Astrocyte of the cerebellum (primary cell): ENCODE measurements at regions of chr6 and their contacts with region 1.

Region 1: DNA sequence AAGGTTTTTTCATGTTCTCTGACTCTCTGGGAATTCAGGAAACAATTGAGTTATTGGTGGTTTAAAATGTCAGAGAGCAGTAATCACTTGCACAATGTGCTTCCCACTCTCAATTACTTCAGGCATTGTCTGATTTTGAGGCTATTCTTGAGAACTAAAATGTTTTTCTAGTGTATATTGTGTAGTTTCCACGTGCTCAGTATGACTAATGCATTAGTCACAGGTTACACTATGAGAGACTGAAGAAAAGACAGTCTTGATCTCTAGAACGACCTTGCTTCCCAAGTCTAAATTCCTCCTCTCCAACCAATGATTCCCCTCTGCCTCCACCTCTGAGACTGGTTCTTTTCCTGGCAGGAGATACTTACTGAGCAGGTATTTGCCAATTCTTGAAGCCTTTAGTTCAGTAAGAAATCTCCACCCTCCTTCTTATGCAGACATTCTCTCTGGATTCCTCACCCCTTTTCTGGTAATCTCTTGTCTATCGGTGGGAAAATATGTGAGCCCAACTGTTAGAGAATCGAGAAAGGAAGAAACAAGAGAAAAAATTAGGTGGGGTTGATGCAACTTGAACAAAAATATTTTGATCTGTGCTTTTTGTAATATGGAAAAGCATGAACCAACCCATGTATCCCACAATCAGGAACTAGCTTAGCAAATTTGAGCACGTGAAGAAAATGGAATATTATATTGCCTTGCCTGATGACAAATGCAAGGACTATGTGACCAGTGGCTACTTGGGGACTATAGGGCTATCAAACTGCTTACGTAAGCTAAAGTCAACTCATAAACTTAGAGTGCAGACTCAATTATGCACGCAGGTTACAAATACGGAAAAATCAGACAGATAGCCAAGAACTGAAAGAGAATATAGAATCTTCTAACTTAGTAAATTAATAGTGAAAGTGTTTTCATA is 61.1 kb upstream of the SLC22A16 start:
- DNase-seq: peak; percentile 89
- H3K4me3 ChIP-seq: no peak overlapping the region
- CTCF ChIP-seq: no peak

Region 2: GRCh38 chr6:110609101-110609500 is 71.6 kb after region 1 on chr6:
- in situ Hi-C with region 1: loop called (anchors 10 kb)
- DNase-seq: no peak
- H3K4me3 ChIP-seq: no peak overlapping the region
- CTCF ChIP-seq: no peak

Region 3: DNA sequence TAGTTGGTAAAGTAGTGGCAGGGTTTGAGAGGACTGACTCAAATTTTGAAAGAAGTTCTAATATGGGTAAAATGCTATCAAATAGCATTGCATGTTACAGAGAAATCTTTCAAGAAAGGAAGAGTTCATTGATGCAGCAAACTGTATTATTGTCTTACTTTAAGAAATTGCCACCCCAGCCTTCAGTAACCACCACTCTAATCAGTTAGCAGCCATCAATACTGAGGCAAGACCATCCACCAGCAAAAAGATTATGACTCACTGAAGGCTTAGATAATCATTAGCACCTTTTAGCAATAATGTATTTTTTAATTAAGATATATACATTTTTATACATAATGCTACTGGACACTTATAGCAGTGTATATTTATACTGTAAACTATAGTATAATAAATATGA is 138.9 kb after region 1 on chr6:
- in situ Hi-C with region 1: loop called (anchors 5 kb)
- DNase-seq: no peak
- H3K4me3 ChIP-seq: no peak overlapping the region
- CTCF ChIP-seq: no peak

Region 4: DNA sequence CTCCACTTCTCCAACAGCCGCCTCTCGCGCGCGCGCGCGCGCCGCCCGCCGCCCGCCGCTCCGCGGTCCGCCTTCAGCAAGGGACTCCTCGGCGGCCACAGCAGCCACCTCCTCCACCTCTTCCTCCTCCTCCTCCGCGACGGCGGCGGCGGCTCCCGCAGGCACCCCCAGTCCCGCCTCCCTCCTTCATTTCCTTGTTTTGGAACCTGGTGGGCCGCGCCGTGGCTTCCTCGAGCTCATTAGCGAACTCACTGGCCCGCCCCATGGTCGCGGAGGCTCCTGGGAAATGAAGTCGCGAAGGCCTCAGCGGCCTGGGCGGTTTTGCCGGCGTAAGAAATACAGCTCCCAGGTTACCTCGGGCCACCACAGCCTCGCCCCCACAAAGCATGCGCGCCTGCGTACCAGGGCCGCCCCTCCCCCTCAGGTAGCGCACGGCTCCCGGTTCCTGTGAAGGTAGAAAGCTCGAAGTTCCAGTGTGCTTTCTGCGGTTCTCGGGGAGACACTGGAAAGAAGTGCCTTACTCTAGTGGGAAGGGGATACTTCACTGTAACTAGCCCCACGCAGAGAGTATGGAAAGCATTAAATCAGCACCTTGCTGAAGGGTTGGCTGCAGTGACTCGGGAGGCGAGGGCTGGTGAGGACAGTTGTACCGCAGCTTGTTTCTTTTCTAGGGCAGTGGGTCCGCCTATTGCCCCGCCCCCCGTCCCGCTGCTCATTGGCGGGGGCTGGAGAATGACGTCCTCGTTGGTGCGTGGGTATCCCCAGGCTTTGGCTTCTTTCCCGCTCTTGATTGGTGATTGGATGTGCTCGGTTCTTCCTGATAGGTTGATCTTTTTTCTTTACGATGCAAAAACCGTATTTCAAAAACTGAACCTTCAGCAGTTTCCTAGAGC is 278.0 kb after region 1 on chr6 and contains the start of gene CDK19:
- in situ Hi-C with region 1: loop called (anchors 5 kb)
- DNase-seq: peak; percentile 94
- H3K4me3 ChIP-seq: peak within 1 kb of the TSS; percentile 84
- CTCF ChIP-seq: no peak

Region 5: DNA sequence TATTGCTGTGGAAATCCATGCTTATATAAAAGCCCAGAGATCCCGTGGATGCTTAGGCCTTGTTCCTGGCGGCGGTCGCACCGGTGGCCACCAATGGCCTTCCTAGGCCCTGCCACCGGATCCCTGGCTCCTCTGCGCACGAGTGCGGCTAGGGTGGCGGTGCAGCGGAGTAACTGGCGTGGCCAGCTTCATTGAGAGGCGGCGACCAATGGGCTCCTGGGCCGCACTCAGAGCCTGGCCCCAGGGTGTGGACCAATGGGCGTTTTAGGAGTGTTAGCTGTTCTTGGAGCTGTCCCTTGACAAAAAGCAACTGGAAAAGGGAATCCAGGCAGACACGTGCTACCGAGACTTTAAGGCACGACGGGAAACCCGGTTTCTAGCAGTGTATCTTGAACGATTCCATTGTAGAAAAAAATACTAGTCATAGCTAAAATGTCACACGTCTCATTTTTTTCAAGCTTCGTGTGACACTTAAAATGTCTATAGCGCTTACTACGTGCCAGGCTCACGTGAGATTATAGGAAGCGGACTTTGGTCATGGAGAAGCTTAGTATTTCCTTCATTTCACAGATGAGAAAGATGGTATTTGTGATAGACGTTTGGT is 338.8 kb after region 1 on chr6:
- in situ Hi-C with region 1: loop called (anchors 5 kb)
- DNase-seq: peak; percentile 59
- H3K4me3 ChIP-seq: peak overlapping the region; percentile 75
- CTCF ChIP-seq: no peak

Region 6: GRCh38 chr6:110949679-110950285 is 412.3 kb after region 1 on chr6:
- in situ Hi-C with region 1: loop called (anchors 5 kb)
- DNase-seq: no peak
- H3K4me3 ChIP-seq: no peak overlapping the region
- CTCF ChIP-seq: no peak

Region 7: GRCh38 chr6:110981202-110981600 is 443.7 kb after region 1 on chr6:
- in situ Hi-C with region 1: loop called (anchors 5 kb)
- DNase-seq: no peak
- H3K4me3 ChIP-seq: peak overlapping the region; percentile 66
- CTCF ChIP-seq: no peak